Posterior vena cava (tissue), 2 donors: ENCODE measurements at regions of chr2 and their contacts with region 1.

Region 1: GRCh38 chr2:233033672-233034071 is 1.2 kb downstream of the NEU2 start:
- DNase-seq: peak; percentile 35

Region 2: GRCh38 chr2:232876078-232876977 is 157.3 kb before region 1 on chr2:
- intact Hi-C with region 1: loop called in 1 of 2 experiments (anchors 10 kb)
- DNase-seq: no peak

Region 3: DNA sequence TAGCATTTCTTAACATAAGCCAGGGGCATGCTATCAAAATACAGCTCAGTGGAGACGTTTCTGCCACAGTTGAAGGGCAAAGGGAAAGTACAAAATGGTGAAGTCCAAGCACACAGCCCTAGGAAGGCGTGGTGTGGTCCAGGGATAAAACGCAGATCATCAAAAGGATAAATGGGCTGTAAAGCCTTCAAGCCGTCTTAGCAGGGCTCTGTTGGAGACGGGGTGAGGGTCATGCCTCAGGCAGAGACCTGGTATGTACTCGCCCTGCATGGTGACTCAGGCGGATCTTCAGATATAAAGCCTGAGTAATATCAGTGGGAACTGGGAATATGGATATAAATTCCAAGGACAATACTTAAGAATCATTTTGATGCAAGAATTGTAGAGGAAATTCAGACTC is 81.8 kb before region 1 on chr2:
- intact Hi-C with region 1: no loop called
- DNase-seq: no peak

Region 4: GRCh38 chr2:232984451-232985207 is 49.0 kb before region 1 on chr2:
- intact Hi-C with region 1: no loop called
- DNase-seq: peak; percentile 12